ENCODE measurements at regions of chr1 and their contacts with region 1.

Region 1: DNA sequence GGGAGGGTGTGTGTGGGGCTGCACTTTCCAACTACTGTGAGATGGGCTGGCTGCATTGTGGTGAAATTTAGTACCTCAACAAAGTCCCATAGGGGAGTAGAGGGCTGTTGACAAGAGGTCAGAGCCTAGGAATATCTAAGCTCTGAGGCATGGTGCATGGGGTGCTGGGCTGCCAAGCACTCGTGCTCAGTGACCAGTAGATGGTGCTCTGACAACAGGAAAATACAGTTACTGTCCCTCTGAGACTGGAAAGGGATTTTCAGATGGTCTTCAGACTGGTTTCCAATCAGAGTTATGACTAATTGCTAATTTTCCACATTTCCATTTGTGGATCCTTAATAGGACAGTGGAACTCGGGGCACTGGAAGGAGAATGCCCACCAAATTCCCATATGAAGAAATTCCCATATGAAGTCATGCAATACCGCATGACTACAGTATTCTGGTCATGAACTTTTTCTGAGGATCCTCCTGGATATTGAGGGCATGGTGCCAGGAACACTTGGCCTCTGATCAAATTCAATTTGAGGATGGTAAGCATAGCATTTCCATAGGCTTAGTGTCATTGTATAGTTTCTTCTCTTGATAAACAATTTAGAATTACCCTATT is 4.1 kb upstream of the CACNA1E start:
- DNase-seq: peak; percentile 55 to 89
- H3K4me3 ChIP-seq: no peak overlapping the region
- H3K27ac ChIP-seq: no peak overlapping the region
- H3K4me1 ChIP-seq: peaks cover 12 to 23% (median 19%) of the 10 kb centered on the region in 4 donors
- H3K27me3 ChIP-seq: peaks cover 12 to 46% (median 29%) of the 10 kb centered on the region in 3 donors
- CTCF ChIP-seq: peak in 5 of 7 experiments; percentile 68 to 76 (median 73)
- EP300 ChIP-seq: no peak
- POLR2A ChIP-seq: no peak

Region 2: DNA sequence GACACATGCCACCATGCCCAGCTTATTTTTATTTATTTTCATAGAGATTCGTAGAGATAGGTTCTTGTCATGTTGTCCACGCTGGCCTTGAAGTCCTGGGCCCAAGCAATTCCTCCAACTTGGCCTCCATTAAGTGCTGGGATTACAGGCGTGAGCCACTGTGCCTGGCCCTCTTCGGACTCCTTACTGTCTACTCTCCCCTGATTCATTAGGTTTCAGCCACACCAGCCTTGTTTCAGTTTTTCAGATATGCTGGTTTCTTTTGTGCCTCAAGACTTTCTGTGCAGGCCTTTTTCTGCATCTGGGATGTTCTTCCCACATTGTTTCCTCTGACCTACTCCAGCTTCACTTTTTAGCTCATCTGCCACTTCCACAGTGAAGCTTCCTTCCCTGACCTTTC is 89.5 kb after region 1 on chr1:
- intact Hi-C with region 1: no loop called
- DNase-seq: no peak
- H3K4me3 ChIP-seq: no peak overlapping the region
- H3K27ac ChIP-seq: no peak overlapping the region
- H3K4me1 ChIP-seq: no peaks in the 10 kb centered on the region
- H3K27me3 ChIP-seq: no peaks in the 10 kb centered on the region
- CTCF ChIP-seq: no peak
- EP300 ChIP-seq: no peak
- POLR2A ChIP-seq: no peak

Region 3: GRCh38 chr1:181592255-181592859 is 113.1 kb after region 1 on chr1:
- intact Hi-C with region 1: no loop called
- DNase-seq: no peak
- H3K4me3 ChIP-seq: no peak overlapping the region
- H3K27ac ChIP-seq: no peak overlapping the region
- H3K4me1 ChIP-seq: no peaks in the 10 kb centered on the region
- H3K27me3 ChIP-seq: no peaks in the 10 kb centered on the region
- CTCF ChIP-seq: no peak
- EP300 ChIP-seq: no peak
- POLR2A ChIP-seq: no peak

Region 4: GRCh38 chr1:181676269-181676668 is 197.0 kb after region 1 on chr1:
- intact Hi-C with region 1: loop called (anchors 5 kb)
- DNase-seq: peak; percentile 49 to 78
- H3K4me3 ChIP-seq: no peak overlapping the region
- H3K27ac ChIP-seq: no peak overlapping the region
- H3K4me1 ChIP-seq: no peaks in the 10 kb centered on the region
- H3K27me3 ChIP-seq: no peaks in the 10 kb centered on the region
- CTCF ChIP-seq: peak in 4 of 7 experiments; percentile 20 to 68 (median 41)
- EP300 ChIP-seq: no peak
- POLR2A ChIP-seq: no peak

Region 5: DNA sequence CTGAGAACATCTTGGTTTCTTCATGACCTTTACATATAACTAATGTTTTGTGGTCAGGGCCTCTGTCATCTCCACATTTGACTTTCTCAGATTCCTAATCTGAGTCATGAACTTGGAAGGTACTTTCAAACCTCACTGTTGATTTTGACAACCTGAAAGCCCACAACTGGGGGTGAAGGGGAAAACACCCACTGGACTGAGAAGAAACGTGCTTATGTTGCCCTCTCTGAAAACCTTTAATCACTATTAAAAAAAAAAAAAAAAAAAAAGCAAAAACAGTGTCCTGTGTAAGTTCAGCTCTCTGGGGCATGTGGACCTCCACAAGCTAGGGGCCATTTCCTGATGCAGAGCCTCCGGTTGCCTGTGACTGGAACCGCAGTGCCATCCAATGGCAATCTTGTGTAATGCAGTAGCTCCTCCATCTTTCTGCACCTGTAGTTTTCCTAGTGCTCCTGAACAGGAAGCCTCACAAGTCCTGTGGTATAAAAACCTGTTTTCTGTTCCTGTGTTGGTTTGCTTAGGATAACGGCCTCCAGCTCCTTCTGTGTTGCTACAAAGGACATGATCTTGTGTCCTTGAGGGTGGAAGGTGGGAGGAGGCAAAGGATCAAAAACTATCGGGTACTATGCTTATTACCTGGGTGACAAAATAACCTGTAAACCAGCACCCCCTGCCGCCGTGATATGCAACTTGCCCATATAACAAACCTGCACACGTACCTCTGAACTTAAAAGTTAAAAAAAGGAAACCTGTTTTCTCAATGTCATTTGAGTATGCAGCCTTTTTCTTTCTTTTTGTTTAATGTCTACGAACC is 457.7 kb after region 1 on chr1:
- intact Hi-C with region 1: loop called (anchors 10 kb)
- DNase-seq: peak; percentile 57 to 87
- H3K4me3 ChIP-seq: no peak overlapping the region
- H3K27ac ChIP-seq: no peak overlapping the region
- H3K4me1 ChIP-seq: no peaks in the 10 kb centered on the region
- H3K27me3 ChIP-seq: no peaks in the 10 kb centered on the region
- CTCF ChIP-seq: peak in 5 of 7 experiments; percentile 27 to 72 (median 37)
- EP300 ChIP-seq: no peak
- POLR2A ChIP-seq: no peak